ENCODE measurements at regions of chr15 and their contacts with region 1.

Region 1: GRCh38 chr15:22980189-22981050 is at the start of gene CYFIP1:
- DNase-seq: peak; percentile 66 to 90
- H3K4me3 ChIP-seq: peak within 1 kb of the TSS; percentile 77
- H3K27ac ChIP-seq: peak within 1 kb of the TSS; percentile 33; the same call in 1 of the 2 replicates
- H3K4me1 ChIP-seq: 0 out of 2 replicates have a peak, but pooled peaks cover 4% of the 10 kb centered on the region
- H3K27me3 ChIP-seq: no peaks in the 10 kb centered on the region
- CTCF ChIP-seq: no peak
- total RNA-seq, gene CYFIP1: 114 TPM in 2 replicates

Region 2: DNA sequence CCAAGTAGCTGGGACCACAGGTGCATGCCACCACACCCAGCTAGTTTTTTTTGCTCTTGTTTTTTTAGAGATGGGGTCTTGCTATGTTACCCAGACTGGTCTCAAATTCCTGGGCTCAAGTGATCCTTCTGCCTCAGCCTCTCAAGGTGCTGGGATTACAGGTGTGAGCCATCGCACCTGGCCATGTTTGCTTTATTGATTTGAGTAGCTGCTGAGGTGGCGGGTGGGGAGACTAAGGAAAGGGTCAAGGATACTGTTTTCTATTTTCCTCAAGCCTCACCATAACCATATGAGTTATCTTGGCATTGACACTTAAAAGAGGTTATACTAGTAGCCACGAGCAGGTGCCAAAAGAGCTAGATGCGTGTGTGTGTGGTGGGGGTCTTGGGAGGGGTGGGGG is 39.2 kb before region 1 on chr15:
- CTCF ChIA-PET with region 1: no interaction called
- POLR2A ChIA-PET with region 1: interaction called, 26 read pairs
- intact Hi-C with region 1: no loop called
- DNase-seq: no peak
- H3K4me3 ChIP-seq: no peak overlapping the region
- H3K27ac ChIP-seq: no peak overlapping the region
- H3K4me1 ChIP-seq: no peaks in the 10 kb centered on the region
- H3K27me3 ChIP-seq: no peaks in the 10 kb centered on the region
- CTCF ChIP-seq: no peak

Region 3: GRCh38 chr15:22963641-22964040 is 16.8 kb before region 1 on chr15:
- CTCF ChIA-PET with region 1: interaction called, 7 read pairs
- POLR2A ChIA-PET with region 1: no interaction called
- intact Hi-C with region 1: loop called (anchors 2 kb)
- DNase-seq: no peak
- H3K4me3 ChIP-seq: no peak overlapping the region
- H3K27ac ChIP-seq: no peak overlapping the region
- H3K4me1 ChIP-seq: no peaks in the 10 kb centered on the region
- H3K27me3 ChIP-seq: no peaks in the 10 kb centered on the region
- CTCF ChIP-seq: no peak

Region 4: GRCh38 chr15:23039151-23039916 is 58.9 kb after region 1 on chr15 and contains the start of gene TUBGCP5:
- CTCF ChIA-PET with region 1: no interaction called
- POLR2A ChIA-PET with region 1: interaction called, 10 read pairs
- intact Hi-C with region 1: loop called (anchors 2 kb)
- DNase-seq: peak; percentile 87 to 97
- H3K4me3 ChIP-seq: peak within 1 kb of the TSS; percentile 70
- H3K27ac ChIP-seq: peak within 1 kb of the TSS; percentile 19; the same call in 1 of the 2 replicates
- H3K4me1 ChIP-seq: peaks cover 9% of the 10 kb centered on the region
- H3K27me3 ChIP-seq: no peaks in the 10 kb centered on the region
- CTCF ChIP-seq: no peak
- total RNA-seq, gene TUBGCP5: 10.7 and 11.2 TPM in 2 replicates

Measured in PC-9 (cell line).